ENCODE measurements at regions of chr5 and their contacts with region 1.

Region 1: GRCh38 chr5:176537608-176538504 is 654 bp upstream of the RNF44 start:
- DNase-seq: peak; percentile 99
- ATAC-seq: peak; percentile 70
- H3K4me3 ChIP-seq: peak overlapping the region; percentile 84 to 100 (median 94)
- H3K4me3 Mint-ChIP-seq: peak overlapping the region; percentile 99
- H3K27ac ChIP-seq: peak overlapping the region; percentile 93 to 99
- H3K27ac Mint-ChIP-seq: peak overlapping the region; percentile 100
- H3K4me1 ChIP-seq: peaks cover 50 to 59% of the 10 kb centered on the region in 2 donors
- H3K4me1 Mint-ChIP-seq: peaks cover 70% of the 10 kb centered on the region
- H3K27me3 ChIP-seq: no peaks in the 10 kb centered on the region
- H3K27me3 Mint-ChIP-seq: no peaks in the 10 kb centered on the region
- CTCF ChIP-seq: no peak

Region 2: DNA sequence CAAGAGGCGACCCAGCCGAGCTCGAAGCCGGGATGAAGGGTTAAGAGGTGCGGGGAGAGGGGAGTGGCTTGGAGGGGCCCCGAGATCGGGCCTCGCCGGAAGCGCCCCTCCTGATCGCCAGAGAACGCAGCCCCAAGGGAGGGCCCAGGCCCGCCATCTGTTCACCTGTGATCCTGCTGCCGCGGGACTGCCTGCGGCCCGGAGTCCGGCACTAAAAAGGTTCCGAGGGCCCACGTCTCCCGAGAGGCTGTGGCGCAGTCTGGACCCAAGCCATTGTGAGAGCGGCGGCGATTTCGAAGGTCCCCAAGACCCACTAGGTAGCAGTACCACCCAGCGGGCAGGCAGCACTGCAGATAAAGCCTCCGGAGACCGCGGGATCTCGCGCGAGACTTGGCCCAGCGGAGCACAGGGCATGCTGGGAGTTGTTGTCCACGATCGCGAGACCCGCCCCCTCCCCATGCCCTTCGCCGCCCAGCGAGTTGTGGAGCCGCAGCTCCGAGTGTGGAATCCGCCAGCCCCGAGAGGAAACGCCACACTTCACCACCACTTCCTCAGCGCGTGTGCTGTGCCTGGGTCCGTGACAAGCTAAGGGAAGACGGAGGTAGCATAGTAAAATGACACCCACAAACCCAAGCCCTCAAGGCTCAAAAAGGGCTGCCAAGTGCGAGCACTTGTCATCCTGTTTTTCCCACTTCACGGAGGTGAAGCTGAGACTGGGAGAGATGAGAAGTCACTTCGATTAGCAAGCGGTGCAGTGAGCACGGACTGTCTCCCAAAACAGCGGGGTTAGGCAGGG is 176.2 kb before region 1 on chr5 and contains the start of gene KIAA1191:
- CTCF ChIA-PET with region 1: interaction called, 4 read pairs
- POLR2A ChIA-PET with region 1: interaction called, 7 read pairs
- intact Hi-C with region 1: loop called (anchors 1 kb)
- DNase-seq: peak; percentile 96
- ATAC-seq: peak; percentile 87
- H3K4me3 ChIP-seq: peak within 1 kb of the TSS; percentile 47 to 94 (median 82)
- H3K4me3 Mint-ChIP-seq: peak within 1 kb of the TSS; percentile 98
- H3K27ac ChIP-seq: peak within 1 kb of the TSS; percentile 77 to 92
- H3K27ac Mint-ChIP-seq: peak within 1 kb of the TSS; percentile 98
- H3K4me1 ChIP-seq: peaks cover 21 to 36% of the 10 kb centered on the region in 2 donors
- H3K4me1 Mint-ChIP-seq: peaks cover 42% of the 10 kb centered on the region
- H3K27me3 ChIP-seq: no peaks in the 10 kb centered on the region
- H3K27me3 Mint-ChIP-seq: no peaks in the 10 kb centered on the region
- CTCF ChIP-seq: peak; percentile 31
- total RNA-seq, gene KIAA1191: 82.9 and 88.1 TPM in 2 replicates

Region 3: DNA sequence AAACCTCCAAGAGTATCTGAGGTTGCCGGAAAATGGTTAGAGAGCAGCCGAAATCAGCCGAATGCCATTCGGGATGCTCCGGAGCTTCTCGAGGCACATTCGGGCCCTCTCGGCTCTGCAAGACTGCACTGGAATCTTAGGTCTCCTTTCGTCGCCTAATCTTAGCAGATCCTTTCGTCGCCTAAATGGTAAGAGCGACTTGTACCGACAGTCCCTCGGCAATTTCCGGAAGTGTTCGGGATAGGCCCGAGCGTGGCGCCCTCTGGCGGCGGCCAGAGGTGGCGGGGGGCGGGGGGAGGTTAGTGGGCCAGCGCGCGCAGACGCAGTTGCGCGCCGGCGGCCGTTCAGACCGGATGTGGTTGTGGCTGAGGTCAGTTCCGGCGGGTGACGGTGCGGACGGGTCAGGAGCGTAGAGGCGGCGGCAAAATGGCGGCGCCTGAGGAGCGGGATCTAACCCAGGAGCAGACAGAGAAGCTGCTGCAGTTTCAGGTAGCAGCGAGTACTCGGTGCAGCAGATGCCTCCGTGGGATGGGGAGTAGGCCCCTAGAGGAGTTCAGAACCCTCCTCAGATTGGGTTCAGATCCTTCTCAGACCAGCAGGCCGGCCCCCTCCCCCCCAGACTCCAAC is 89.8 kb before region 1 on chr5 and contains the start of gene FAF2:
- CTCF ChIA-PET with region 1: interaction called, 18 read pairs
- POLR2A ChIA-PET with region 1: interaction called, 30 read pairs
- intact Hi-C with region 1: loop called (anchors 1 kb)
- DNase-seq: peak; percentile 99
- ATAC-seq: peak; percentile 91
- H3K4me3 ChIP-seq: peak within 1 kb of the TSS; percentile 77 to 99 (median 99)
- H3K4me3 Mint-ChIP-seq: peak within 1 kb of the TSS; percentile 98
- H3K27ac ChIP-seq: peak within 1 kb of the TSS; percentile 81 to 93
- H3K27ac Mint-ChIP-seq: peak within 1 kb of the TSS; percentile 99
- H3K4me1 ChIP-seq: peaks cover 16 to 20% of the 10 kb centered on the region in 2 donors
- H3K4me1 Mint-ChIP-seq: peaks cover 32% of the 10 kb centered on the region
- H3K27me3 ChIP-seq: no peaks in the 10 kb centered on the region
- H3K27me3 Mint-ChIP-seq: no peaks in the 10 kb centered on the region
- CTCF ChIP-seq: peak; percentile 92
- total RNA-seq, gene FAF2: 35.1 and 41.3 TPM in 2 replicates

Region 4: GRCh38 chr5:176514244-176514950 is 23.5 kb before region 1 on chr5:
- CTCF ChIA-PET with region 1: interaction called, 8 read pairs
- POLR2A ChIA-PET with region 1: interaction called, 9 read pairs
- intact Hi-C with region 1: loop called (anchors 2 kb)
- DNase-seq: peak; percentile 56
- ATAC-seq: peak; percentile 79
- H3K4me3 ChIP-seq: peak overlapping the region in 1 of 5 experiments; percentile 15
- H3K4me3 Mint-ChIP-seq: peak overlapping the region; percentile 76
- H3K27ac ChIP-seq: peak overlapping the region; percentile 34 to 60
- H3K27ac Mint-ChIP-seq: peak overlapping the region; percentile 88
- H3K4me1 ChIP-seq: peaks cover 13 to 15% of the 10 kb centered on the region in 2 donors
- H3K4me1 Mint-ChIP-seq: peaks cover 26% of the 10 kb centered on the region
- H3K27me3 ChIP-seq: no peaks in the 10 kb centered on the region
- H3K27me3 Mint-ChIP-seq: no peaks in the 10 kb centered on the region
- CTCF ChIP-seq: no peak

Measured in B cell (primary cell).